Activated T-helper 2 cell treated with anti-CD3 and anti-CD28 coated beads, Interferon-gamma antibody, Interleukin-2, Interleukin-4, amounts not matched to agents 10 μg/mL and 5 μg/mL and 100 μg/mL, durations not matched to agents 14 hours and 24 hours and 36 hours (primary cell): ENCODE measurements at regions of chr1 and their contacts with region 1.

Region 1: DNA sequence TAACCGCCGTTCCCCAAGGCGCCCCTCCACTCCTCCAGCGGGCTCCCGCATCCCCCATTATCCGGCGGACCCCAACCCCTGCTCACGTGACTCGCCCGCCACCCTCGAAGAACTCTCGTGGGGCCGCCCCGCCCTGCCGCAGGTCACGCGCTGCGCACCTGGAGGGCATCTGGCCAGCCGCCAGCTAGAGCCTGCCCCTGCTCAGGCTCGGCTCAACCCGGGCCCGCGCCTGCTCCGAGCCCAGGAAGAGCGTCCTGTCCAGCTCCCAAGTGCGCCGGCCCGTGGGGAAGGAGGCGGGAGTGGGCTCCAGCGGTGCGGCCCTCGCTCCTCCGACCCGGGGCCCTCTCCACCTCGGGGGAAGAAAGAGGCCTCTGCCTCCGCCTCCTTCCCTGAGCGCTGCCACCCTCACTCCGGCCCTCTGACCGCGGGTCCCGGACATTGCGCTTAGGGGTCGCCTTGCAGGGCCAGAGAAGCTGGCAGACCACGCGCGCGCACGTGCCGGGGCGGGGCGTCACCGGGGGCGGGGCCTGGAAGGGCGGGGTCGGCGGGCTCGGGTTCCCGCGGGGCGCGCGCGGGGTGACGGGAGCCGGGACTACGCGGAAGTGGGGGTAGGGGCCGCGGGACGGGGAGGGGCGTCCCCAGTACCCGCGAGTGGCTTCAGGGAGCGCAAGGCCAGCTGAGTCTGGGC is 28.4 kb downstream of the HMGN2 start:
- DNase-seq: peak; percentile 85
- H3K4me3 Mint-ChIP-seq: peak overlapping the region; percentile 87
- H3K27ac Mint-ChIP-seq: peak overlapping the region; percentile 89
- H3K4me1 Mint-ChIP-seq: peaks cover 21% of the 10 kb centered on the region
- H3K27me3 Mint-ChIP-seq: no peaks in the 10 kb centered on the region

Region 2: GRCh38 chr1:26408604-26409003 is 92.0 kb before region 1 on chr1:
- intact Hi-C with region 1: no loop called
- DNase-seq: peak; percentile 70
- H3K4me3 Mint-ChIP-seq: no peak overlapping the region
- H3K27ac Mint-ChIP-seq: no peak overlapping the region
- H3K4me1 Mint-ChIP-seq: peaks cover 15% of the 10 kb centered on the region
- H3K27me3 Mint-ChIP-seq: peaks cover 55% of the 10 kb centered on the region

Region 3: DNA sequence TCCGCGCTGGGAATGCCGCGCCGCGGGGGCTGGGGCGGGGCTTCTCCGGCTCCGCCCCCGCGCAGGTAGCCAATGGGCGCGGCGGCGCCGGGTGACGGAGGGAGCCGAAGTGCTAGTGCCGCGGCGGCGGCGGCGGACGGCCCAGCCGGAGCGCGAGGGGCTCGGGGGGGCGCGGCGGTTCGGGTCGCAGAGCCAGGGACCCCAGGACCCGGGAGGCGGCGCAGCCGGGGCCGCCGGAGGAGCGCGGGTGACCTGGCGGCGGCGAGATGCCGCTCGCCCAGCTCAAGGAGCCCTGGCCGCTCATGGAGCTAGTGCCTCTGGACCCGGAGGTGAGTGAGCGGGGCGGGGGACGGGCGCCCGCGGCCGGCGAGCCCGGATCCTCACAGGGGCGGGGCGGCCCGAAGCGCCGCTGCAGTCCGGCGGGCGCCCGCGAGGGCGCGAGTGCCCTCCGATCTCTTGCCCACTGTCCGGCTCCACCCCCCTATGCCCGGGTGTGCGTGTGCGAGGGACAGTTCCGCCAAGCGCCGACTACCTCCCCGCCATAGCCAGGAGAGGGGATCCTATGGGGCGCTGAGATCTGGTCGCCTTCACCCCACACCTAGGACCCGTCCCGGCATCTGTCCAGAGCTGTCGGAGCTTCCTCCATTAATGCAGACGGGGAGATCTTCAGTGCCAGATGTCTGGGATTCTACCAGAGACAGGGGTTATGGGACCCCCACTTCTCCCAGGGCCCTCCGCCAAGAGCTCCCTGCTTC is 29.2 kb after region 1 on chr1 and contains the start of gene RPS6KA1:
- intact Hi-C with region 1: loop called (anchors 2 kb)
- DNase-seq: peak; percentile 65
- H3K4me3 Mint-ChIP-seq: peak within 1 kb of the TSS; percentile 96
- H3K27ac Mint-ChIP-seq: peak within 1 kb of the TSS; percentile 93
- H3K4me1 Mint-ChIP-seq: peaks cover 21% of the 10 kb centered on the region
- H3K27me3 Mint-ChIP-seq: peaks cover 5% of the 10 kb centered on the region
- total RNA-seq, gene RPS6KA1: 190 and 199 TPM in 2 replicates

Region 4: DNA sequence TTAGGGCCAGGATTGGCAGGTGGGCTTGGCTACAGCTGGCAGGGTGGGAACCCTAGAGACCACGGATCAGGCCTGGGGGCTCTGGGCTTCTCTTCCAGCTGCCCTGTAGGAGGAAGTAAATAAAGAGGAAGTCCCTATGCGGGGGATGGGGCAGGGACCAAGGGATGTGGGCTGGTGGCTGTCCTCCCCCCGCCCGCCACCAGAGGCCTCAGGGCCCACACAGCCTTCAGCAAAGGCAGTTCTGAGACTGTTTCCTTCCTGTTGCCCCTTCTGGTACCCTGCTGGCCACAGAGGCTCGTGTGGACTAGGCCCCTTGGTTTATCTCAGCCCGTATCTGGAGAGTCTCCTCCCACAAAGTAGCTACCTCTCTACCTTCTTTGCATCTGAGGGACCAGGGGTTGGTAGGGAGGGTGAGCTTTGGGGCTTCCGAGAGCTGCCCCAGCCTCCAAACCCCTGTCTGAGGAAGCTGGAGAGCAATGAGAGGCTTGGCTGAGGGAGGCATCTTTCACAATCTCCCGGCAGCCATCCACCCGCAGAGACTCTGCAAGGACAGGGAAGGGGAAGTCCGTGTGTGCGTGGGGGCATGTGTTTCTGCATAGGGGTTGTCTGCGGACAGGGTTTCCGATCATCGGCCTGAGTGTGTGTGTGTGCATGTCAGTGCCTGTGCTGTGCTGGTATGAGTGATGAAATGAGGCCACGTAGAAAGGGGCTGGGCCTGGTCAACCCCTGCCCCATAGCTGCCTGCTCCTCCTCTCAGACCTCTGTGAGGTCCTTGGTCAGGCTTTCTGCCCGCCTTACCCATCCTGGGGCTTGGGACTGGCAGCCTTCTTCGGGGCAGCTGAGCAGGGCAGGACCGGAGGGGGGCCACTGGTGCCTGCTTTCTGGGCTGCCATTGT is 41.4 kb after region 1 on chr1:
- intact Hi-C with region 1: loop called (anchors 1 kb)
- DNase-seq: peak; percentile 73
- H3K4me3 Mint-ChIP-seq: peak overlapping the region; percentile 77
- H3K27ac Mint-ChIP-seq: peak overlapping the region; percentile 97
- H3K4me1 Mint-ChIP-seq: peaks cover 67% of the 10 kb centered on the region
- H3K27me3 Mint-ChIP-seq: no peaks in the 10 kb centered on the region

Region 5: GRCh38 chr1:26597629-26598039 is 97.0 kb after region 1 on chr1:
- intact Hi-C with region 1: no loop called
- DNase-seq: no peak
- H3K4me3 Mint-ChIP-seq: no peak overlapping the region
- H3K27ac Mint-ChIP-seq: no peak overlapping the region
- H3K4me1 Mint-ChIP-seq: peaks cover 13% of the 10 kb centered on the region
- H3K27me3 Mint-ChIP-seq: peaks cover 2% of the 10 kb centered on the region

Region 6: GRCh38 chr1:26666855-26667254 is 166.2 kb after region 1 on chr1:
- intact Hi-C with region 1: no loop called
- DNase-seq: no peak
- H3K4me3 Mint-ChIP-seq: no peak overlapping the region
- H3K27ac Mint-ChIP-seq: no peak overlapping the region
- H3K4me1 Mint-ChIP-seq: peaks cover 7% of the 10 kb centered on the region
- H3K27me3 Mint-ChIP-seq: peaks cover 2% of the 10 kb centered on the region